Right ventricle myocardium inferior (tissue), 1 donor: ENCODE measurements at regions of chr17 and their contacts with region 1.

Region 1: GRCh38 chr17:72120642-72121163 is at the start of gene SOX9:
- DNase-seq: peak; percentile 90
- ATAC-seq: peak; percentile 93
- total RNA-seq, gene SOX9: 13.8 TPM

Region 2: DNA sequence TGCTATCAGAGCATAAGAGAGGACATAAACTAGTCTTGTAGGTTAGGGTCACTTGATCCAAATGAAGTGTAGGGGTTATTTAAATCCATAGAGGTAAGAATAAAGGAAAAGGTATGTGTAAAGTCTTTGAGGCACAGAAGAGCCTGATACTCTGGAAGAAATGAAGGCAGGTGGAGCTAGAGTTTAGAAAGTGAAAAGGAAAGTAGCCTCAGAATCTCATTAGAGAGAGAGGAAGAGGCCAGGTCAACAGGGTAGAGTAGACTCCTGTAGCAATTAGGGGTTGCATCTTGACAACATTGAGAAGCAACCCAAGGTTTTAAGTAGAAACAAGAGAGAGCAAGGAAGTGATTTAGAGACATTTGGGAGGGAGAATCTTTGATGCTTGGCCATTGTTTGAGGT is 235.0 kb before region 1 on chr17:
- intact Hi-C with region 1: loop called (anchors 10 kb)
- DNase-seq: no peak
- ATAC-seq: no peak

Region 3: DNA sequence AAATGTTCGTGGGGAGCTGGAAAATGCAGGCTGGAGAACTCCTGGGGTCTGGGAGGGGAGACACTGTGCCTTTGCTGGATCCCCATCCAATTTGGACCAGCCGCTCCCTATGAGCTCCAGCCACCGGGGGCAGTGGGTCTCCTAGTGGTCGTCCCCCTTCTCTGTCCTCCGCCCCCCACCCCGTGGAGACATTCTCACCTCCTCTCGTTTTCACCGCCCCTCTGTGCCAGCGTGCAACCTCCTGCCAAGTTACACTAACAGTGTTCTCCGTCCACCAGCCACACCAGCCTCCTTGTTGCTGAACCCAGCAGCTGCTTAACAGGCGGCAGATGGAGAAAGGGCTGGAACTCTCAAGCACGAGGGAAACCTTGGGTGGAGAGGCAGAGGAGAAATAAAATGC is 67.3 kb before region 1 on chr17:
- intact Hi-C with region 1: no loop called
- DNase-seq: no peak
- ATAC-seq: no peak

Region 4: DNA sequence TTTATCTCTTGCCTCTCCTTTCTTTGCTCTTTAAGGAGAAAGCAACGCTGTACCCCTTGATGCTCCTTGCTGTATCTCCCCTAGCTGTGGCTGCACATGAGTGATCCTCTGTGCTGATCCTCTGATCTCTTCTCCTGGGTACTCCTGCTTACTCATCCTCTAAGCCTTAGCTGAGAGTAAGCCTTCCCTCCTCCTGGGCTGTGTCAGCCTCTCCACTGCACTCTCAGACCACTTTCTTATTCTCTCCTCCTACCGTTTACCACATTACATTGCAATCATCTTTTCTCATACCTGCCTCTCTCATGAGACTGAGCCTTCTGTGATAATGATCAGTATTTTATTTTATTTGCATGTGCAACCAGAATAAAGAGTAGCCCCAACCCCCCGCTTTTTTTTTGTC is 25.3 kb after region 1 on chr17:
- intact Hi-C with region 1: no loop called
- DNase-seq: no peak
- ATAC-seq: no peak

Region 5: GRCh38 chr17:72165867-72166439 is 45.2 kb after region 1 on chr17:
- intact Hi-C with region 1: loop called (anchors 5 kb)
- DNase-seq: no peak
- ATAC-seq: peak; percentile 48

Region 6: DNA sequence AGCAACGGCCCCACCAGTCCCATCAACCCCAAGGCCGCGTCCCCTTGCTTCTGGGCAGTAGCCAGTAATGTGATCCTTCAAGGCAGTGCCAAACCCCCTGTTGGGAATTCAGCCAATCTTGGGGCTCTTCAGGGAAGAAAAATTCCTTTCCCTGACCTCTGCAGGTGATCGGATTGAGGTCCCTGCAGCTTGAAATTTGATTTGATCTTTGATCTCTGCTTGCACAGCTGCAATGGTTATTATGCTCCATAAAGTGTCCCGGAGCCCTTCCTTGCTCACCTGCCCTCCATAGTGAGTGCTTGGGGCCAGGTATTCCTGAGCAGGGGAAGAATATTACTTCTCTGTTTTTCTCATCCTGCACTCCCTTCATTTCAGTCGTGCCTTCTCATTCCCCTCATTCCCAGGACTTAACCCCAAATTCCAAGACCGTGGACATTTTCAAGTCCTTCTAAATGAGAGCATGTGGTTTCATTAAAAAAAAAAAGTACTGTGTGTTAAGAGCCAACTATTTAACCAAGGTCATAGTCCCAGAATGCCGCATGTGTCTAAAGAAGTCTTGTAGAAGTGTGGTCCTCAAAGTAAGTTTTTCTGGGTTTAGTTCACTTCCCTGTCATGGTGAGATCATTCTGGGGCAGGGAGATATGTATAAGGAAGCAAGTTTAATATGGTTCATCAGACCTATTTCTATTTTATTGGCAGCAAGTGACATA is 56.4 kb after region 1 on chr17:
- intact Hi-C with region 1: no loop called
- DNase-seq: no peak
- ATAC-seq: no peak

Region 7: DNA sequence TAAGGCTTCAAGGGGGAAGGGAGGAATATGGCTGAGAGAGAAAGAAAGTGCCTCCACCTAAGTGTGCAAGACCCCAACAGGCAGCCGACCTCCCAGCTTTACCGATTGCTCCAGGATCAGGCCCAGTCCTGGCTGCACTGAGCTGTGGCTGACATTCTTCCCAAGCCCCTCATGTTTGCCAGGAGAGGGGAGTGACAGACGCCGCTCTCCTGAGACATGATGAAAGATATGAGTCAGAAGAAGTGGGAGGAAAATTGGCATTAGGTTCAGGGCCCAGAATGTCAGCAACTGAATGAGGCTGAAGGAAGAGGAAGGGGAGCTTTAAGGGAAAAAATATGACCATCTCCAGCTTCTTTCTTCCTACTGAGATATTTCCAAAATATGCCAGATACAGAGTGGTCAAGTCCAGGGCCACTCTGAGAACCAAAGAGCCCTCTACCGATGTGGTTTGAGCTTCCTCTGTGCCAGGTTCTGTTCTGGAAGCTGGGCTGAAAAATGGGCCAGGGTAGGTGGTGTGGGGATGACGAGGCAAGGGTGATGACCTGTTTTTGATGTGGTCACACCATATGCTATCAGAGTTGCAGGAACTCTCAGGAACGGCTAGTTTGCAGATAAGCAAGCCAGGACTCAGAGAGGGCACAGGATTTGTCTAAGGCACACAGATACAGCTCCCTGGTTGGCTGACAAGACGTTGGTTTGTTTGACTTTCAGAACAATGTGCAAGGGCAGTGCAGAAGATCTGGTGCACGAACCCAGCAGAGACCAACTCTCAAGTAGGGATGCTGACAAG is 176.8 kb after region 1 on chr17:
- intact Hi-C with region 1: loop called (anchors 10 kb)
- DNase-seq: no peak
- ATAC-seq: peak; percentile 62

Region 8: DNA sequence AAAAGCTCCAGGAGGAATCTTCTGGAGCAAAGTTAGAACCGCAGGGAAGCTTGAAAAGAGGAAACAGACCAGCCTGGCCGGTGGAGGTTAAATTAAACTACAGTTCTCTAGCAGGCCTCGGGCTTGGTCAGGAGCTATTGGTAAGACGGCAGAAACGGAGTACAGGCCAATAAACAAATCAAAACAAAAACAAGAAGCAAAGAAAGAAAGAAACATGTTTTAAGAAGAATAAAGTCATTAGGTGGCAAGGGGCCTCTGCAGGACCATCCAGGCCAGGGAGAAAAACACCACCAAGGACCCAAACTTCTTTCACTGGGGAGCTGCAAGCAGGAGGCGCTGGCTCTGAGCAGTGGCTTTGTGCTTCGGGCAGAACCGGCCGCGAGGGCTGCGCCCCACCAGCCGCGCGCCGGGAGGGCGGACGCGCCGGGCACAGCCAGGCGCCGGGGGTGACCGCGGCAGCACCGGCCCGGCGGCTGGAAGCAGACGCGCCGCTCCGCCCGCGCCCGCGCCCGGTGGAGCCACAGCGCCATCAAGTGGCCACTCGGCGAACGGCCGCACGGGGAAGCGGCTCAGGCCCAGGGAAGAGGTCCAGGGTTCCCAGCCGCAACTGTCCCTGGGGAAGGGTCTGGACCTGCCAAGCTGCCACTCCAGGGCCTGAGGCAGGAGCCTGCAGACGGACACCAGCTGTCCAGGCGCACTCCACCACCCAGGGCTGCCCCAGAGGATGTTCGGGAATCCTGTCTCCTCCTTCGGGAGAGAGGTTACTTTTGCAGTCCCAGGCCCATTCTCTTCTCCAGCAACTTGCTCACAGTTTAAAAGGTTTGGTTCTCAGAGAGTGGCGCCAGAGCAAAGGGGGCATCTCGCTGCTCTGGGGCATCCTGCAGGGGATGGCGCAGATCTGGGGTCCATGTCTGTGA is 419.5 kb after region 1 on chr17:
- intact Hi-C with region 1: loop called (anchors 10 kb)
- DNase-seq: peak; percentile 85
- ATAC-seq: peak; percentile 96